Activated CD8-positive, alpha-beta T cell treated with anti-CD3 and anti-CD28 coated beads, Interleukin-2, amount 10 ng/mL, durations not matched to agents 7 days and 5 days (primary cell): ENCODE measurements at regions of chr12 and their contacts with region 1.

Region 1: GRCh38 chr12:89709157-89709994 is 738 bp upstream of the ATP2B1 start:
- DNase-seq: peak; percentile 99
- ATAC-seq: peak; percentile 79
- H3K4me3 Mint-ChIP-seq: peak overlapping the region; percentile 83
- H3K27ac Mint-ChIP-seq: peak overlapping the region; percentile 89
- H3K4me1 Mint-ChIP-seq: peaks cover 26% of the 10 kb centered on the region
- H3K27me3 Mint-ChIP-seq: peaks cover 3% of the 10 kb centered on the region

Region 2: DNA sequence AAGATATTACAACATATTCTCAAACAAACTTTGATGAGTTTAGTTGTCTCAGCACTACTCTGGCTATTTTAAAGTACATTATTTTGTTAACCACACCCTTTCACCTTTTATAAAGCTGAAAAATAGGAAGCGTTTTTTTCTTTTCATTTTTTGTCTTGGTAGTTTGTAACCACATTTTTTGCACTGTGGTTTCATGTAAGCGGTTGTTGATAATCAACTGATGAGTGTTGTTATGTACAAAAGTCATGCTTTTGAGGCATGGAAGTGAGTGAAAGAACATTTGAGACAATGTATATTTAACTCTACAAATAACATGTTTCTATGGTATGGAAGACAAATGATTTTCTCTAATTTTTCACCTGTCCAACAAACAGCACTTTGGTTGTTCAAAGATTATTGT is 51.4 kb after region 1 on chr12:
- CTCF ChIA-PET with region 1: no interaction called
- POLR2A ChIA-PET with region 1: interaction called, 13 read pairs
- DNase-seq: no peak
- ATAC-seq: peak; percentile 51
- H3K4me3 Mint-ChIP-seq: no peak overlapping the region
- H3K27ac Mint-ChIP-seq: no peak overlapping the region
- H3K4me1 Mint-ChIP-seq: peaks cover 35% of the 10 kb centered on the region
- H3K27me3 Mint-ChIP-seq: no peaks in the 10 kb centered on the region

Region 3: DNA sequence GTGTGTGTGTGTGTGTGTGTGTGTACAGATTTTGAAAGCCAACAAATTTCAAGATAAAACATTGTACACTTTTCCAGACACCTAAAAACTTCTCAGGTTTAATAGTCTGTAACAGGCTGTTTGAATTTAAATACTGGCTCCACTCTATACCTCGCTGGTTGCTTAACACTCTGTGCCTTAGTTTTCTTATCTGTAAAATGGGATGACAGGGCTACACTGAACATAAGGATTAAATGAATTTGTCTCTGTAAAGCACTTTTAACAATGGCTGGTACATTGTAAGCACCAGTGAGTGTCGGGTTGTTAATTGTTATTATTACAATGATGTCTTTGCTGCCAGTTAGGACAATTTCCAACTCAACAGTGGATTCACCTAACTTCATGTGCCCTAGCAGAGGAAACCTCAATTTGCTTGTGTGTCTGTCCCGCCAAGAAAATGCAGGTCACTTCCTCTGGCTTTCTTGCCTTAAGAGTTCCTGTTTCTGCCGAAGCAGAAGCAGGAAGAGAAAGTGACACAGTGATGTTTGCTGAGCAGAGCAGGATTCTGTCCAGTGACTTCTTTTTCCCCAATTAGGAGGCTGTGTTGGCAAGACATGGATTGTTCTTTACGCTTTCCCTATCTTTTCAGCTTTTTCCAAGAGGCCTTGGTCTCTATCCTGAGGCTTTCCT is 153.3 kb after region 1 on chr12:
- CTCF ChIA-PET with region 1: no interaction called
- POLR2A ChIA-PET with region 1: interaction called, 17 read pairs
- DNase-seq: peak; percentile 63
- ATAC-seq: peak; percentile 54
- H3K4me3 Mint-ChIP-seq: peak overlapping the region; percentile 73
- H3K27ac Mint-ChIP-seq: peak overlapping the region; percentile 90
- H3K4me1 Mint-ChIP-seq: peaks cover 37% of the 10 kb centered on the region
- H3K27me3 Mint-ChIP-seq: no peaks in the 10 kb centered on the region